PC-3 (cell line): ENCODE measurements at regions of chr14 and their contacts with region 1.

Region 1: GRCh38 chr14:61489932-61490331 is 168.6 kb downstream of the PRKCH start:
- DNase-seq: peak; percentile 32
- ATAC-seq: no peak
- H3K4me3 ChIP-seq: no peak overlapping the region
- H3K27ac ChIP-seq: peak overlapping the region; percentile 77
- H3K4me1 ChIP-seq: peaks cover 43% of the 10 kb centered on the region
- H3K27me3 ChIP-seq: no peaks in the 10 kb centered on the region
- CTCF ChIP-seq: no peak

Region 2: DNA sequence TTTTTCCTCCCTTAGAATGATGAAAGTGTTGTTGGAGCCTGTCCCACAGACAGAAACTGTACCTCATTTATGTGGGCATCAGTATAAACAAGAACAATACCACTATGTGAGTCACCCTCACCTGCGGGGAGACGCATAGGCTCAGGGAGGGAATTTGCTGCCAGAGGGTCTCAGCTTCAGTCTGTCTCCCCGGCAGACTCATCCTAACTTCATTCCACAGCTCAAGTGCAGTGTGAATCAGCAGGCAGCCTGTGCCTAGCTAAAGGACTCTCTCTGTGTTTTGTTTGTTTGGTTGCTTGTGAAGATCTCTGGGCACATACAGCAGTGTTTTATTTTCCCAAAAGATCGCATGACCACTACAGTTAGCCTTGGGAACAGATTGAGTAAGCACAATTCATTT is 69.6 kb before region 1 on chr14:
- CTCF ChIA-PET with region 1: no interaction called
- POLR2A ChIA-PET with region 1: no interaction called
- intact Hi-C with region 1: no loop called
- DNase-seq: peak; percentile 88
- ATAC-seq: peak; percentile 91
- H3K4me3 ChIP-seq: no peak overlapping the region
- H3K27ac ChIP-seq: peak overlapping the region; percentile 67
- H3K4me1 ChIP-seq: peaks cover 19% of the 10 kb centered on the region
- H3K27me3 ChIP-seq: no peaks in the 10 kb centered on the region
- CTCF ChIP-seq: no peak

Region 3: GRCh38 chr14:61512026-61512834 is 22.3 kb after region 1 on chr14:
- CTCF ChIA-PET with region 1: no interaction called
- POLR2A ChIA-PET with region 1: no interaction called
- intact Hi-C with region 1: loop called (anchors 2 kb)
- DNase-seq: peak; percentile 43
- ATAC-seq: 0 out of 2 replicates have a peak, but pooled peaks have one; percentile 1
- H3K4me3 ChIP-seq: no peak overlapping the region
- H3K27ac ChIP-seq: peak overlapping the region; percentile 39
- H3K4me1 ChIP-seq: peaks cover 62% of the 10 kb centered on the region
- H3K27me3 ChIP-seq: no peaks in the 10 kb centered on the region
- CTCF ChIP-seq: no peak